Right lobe of liver (tissue), 6 donors: ENCODE measurements at regions of chr1 and their contacts with region 1.

Region 1: DNA sequence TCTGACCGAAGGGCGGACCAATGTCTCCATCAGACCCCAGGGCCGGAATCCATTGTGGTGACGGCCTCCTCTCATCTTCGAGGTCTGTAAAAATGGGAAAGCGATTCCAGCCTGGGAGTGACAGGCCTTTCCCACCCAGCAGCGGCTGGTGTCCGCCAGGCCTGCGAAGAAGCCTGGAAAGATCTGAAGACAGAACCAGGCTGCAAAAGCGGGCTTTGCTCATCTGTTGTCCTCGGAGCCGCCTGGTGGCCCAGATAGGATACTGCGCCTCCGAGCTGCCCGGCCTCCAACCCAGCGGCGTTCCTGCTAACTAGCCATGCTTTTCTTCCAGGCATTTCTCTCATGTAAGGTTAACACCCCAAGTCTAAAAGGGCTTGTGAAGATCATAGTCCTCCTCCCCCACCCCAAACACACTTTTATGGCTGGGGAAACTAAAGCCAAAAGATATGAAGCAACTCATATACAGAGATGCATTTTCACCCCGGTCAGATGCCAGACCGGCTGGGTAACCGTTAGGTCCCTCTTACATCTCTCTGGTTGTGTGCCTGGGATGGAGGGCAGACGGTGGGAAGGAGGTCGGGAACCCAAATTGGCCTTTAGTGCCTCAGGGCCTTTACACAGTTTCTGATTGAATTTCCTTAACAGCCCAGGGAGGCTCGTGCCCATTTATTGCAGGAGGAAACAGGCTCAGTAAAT is 1.9 kb upstream of the DHRS3 start:
- DNase-seq: peak; percentile 84 to 86 (median 85)
- ATAC-seq: peak; percentile 53 to 65 (median 54)
- H3K4me3 ChIP-seq: peak overlapping the region; percentile 70 to 92 (median 78)
- H3K27ac ChIP-seq: peak overlapping the region; percentile 96 to 100 (median 99)
- H3K4me1 ChIP-seq: peaks cover 0 to 29% (median 11%) of the 10 kb centered on the region in 4 donors
- H3K27me3 ChIP-seq: no peaks in the 10 kb centered on the region
- CTCF ChIP-seq: peak; percentile 93 to 98 (median 93)
- POLR2A ChIP-seq: no peak

Region 2: GRCh38 chr1:12477936-12478611 is 141.9 kb before region 1 on chr1:
- intact Hi-C with region 1: loop called in 1 of 2 experiments (anchors 5 kb)
- DNase-seq: peak; percentile 87 to 93 (median 88)
- ATAC-seq: peak; percentile 81 to 91 (median 86)
- H3K4me3 ChIP-seq: peak overlapping the region in 1 of 3 donors; percentile 8
- H3K27ac ChIP-seq: peak overlapping the region; percentile 48 to 85 (median 64)
- H3K4me1 ChIP-seq: peaks cover 0 to 80% (median 42%) of the 10 kb centered on the region in 4 donors
- H3K27me3 ChIP-seq: no peaks in the 10 kb centered on the region
- CTCF ChIP-seq: no peak
- POLR2A ChIP-seq: no peak

Region 3: DNA sequence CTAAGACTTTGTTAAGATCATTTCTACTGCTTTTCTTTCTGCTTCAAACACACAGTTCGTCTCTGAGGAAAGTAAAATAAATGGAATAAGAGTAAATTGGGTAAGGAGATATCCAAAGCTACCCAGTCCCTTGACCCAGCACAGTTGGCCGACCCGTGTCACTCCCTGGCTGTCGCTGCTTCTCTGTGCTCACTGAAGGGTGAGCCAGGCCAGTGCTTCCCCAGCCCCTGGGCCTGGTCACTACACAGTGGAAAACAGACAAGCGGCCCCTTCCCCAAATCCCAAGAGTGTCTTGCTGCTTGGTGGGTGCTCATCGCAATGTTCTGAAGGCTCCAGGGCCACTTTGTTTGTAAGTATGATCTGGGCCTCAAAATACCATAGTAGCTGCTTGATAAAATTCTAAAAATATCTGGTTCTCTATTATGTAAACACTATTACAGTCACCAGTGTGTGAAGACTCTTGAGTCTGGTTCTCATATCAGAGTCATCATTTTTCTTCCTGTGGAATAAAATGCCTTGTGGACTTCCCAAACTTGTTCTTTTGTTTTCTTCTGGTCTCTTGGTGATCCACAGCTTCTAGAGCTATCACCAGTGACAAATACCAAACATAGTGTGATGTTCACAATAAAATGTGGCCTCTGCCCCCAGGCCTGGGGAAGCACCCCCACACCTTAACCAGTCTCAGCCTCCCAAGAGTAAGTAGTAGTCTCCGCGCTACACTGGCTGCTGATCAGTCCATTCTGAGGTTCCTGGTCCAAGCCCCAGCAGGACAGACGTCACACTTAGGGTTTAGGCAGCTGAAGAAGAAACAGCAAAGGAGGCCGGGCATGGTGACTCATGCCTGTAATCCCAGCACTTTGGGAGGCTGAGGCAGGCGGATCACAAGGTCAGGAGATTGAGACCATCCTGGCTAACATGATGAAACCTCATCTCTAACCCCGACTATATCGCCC is 108.1 kb before region 1 on chr1:
- intact Hi-C with region 1: no loop called
- DNase-seq: no peak
- ATAC-seq: peak in 1 of 4 donors; percentile 9
- H3K4me3 ChIP-seq: no peak overlapping the region
- H3K27ac ChIP-seq: peak overlapping the region; percentile 11 to 26 (median 22)
- H3K4me1 ChIP-seq: no peaks in the 10 kb centered on the region
- H3K27me3 ChIP-seq: no peaks in the 10 kb centered on the region
- CTCF ChIP-seq: no peak
- POLR2A ChIP-seq: no peak

Region 4: DNA sequence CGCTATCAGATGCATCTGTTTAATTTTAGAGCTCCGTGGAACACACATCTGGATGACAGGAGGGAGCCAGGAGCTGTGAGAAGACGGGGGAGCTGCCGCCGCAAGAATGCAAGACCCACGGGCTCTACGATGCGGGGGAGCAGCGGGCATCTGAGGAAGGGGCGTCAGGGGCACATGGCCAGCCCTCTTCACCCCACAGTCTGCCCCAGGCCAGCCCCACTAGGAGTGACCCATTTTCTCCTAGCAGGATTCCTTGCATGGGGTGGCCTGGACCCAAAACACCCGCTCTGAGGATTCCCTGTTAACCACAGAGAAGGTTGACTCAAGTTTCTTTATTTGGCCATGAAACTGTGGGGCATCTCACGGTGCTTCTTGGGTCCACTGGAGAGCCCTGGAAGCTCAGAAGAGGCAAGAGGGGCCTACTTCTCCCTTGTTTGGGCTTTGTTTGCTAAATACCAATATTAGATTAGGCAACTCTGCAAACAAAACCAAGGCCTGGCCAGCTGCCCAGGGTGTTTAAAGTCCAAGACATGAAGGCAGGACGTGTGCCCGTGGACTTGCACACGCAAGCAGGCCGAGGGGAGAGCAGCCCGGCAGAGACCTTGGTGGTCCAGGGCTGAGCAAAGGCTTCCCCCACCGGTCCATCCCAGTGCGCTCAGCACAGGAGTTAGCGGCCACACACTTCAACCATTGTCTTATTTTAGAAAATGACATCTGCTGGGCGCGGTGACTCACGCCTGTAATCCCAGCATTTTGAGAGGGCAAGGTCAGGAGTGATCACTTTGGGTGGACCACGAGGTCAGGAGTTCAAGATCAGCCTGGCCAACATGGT is 91.7 kb before region 1 on chr1:
- intact Hi-C with region 1: loop called in 1 of 2 experiments (anchors 2 kb)
- DNase-seq: peak; percentile 90 to 94 (median 90)
- ATAC-seq: peak; percentile 45 to 62 (median 58)
- H3K4me3 ChIP-seq: peak overlapping the region; percentile 18 to 49 (median 48)
- H3K27ac ChIP-seq: peak overlapping the region; percentile 55 to 95 (median 80)
- H3K4me1 ChIP-seq: peaks cover 0 to 72% (median 17%) of the 10 kb centered on the region in 4 donors
- H3K27me3 ChIP-seq: no peaks in the 10 kb centered on the region
- CTCF ChIP-seq: no peak
- POLR2A ChIP-seq: peak; percentile 29